ENCODE measurements at regions of chr3 and their contacts with region 1.

Region 1: GRCh38 chr3:52001443-52001974 is 5.8 kb upstream of the RPL29 start:
- DNase-seq: peak; percentile 77 to 94 (median 89)
- ATAC-seq: peak; percentile 99
- H3K4me3 ChIP-seq: no peak overlapping the region
- H3K4me3 Mint-ChIP-seq: no peak overlapping the region
- H3K27ac ChIP-seq: no peak overlapping the region
- H3K27ac Mint-ChIP-seq: no peak overlapping the region
- H3K4me1 ChIP-seq: peaks cover 13% of the 10 kb centered on the region
- H3K4me1 Mint-ChIP-seq: peaks cover 14% of the 10 kb centered on the region
- H3K27me3 ChIP-seq: no peaks in the 10 kb centered on the region
- H3K27me3 Mint-ChIP-seq: no peaks in the 10 kb centered on the region
- CTCF ChIP-seq: peak; percentile 87

Region 2: DNA sequence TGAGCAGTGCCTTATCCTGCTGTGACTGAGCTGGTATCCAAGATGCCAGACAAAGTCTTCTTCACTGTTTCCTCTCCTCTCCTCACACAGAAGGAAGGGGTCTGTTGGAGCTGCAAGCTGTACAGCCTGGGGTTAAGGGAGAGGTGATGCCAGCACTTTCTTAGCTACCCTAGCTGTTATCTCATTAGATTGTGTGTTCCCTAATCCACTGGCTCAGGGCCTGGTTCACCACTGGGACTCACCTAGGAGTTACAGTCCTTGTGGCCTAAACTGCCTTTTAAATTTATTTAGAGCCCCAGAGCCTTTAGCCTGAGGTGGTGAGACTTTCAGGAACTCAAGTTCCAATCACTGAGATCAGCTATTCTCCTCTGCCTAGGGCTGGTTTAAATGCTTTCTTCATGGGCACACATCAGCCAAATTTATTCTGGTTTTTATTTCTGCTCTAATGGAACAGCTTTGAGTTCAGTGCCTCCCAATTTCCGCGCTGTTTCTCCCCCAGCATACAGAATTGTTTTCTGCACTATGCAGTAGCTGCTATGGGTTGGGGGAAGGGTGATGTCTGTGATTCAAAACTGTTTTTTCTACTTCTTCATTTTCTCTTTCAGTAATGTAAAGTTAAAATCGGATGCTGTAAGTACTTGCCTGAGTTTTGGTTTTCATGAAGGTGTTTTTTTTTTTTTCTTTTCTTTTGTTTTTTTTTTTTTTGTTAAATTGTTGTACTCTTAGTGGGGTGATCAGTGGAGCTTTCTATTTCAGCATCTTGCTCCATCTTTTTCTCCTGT is 1127.9 kb before region 1 on chr3:
- CTCF ChIA-PET with region 1: no interaction called
- POLR2A ChIA-PET with region 1: no interaction called
- intact Hi-C with region 1: no loop called
- DNase-seq: no peak
- ATAC-seq: no peak
- H3K4me3 ChIP-seq: no peak overlapping the region
- H3K4me3 Mint-ChIP-seq: no peak overlapping the region
- H3K27ac ChIP-seq: no peak overlapping the region
- H3K27ac Mint-ChIP-seq: no peak overlapping the region
- H3K4me1 ChIP-seq: no peaks in the 10 kb centered on the region
- H3K4me1 Mint-ChIP-seq: no peaks in the 10 kb centered on the region
- H3K27me3 ChIP-seq: peaks cover 0 to 2% of the 10 kb centered on the region in 2 experiments
- H3K27me3 Mint-ChIP-seq: peaks cover 37% of the 10 kb centered on the region
- CTCF ChIP-seq: no peak

Region 3: GRCh38 chr3:51819709-51820406 is 181.7 kb before region 1 on chr3:
- CTCF ChIA-PET with region 1: no interaction called
- POLR2A ChIA-PET with region 1: no interaction called
- intact Hi-C with region 1: no loop called
- DNase-seq: peak in 2 of 9 experiments; percentile 13 to 27
- ATAC-seq: no peak
- H3K4me3 ChIP-seq: no peak overlapping the region
- H3K4me3 Mint-ChIP-seq: no peak overlapping the region
- H3K27ac ChIP-seq: no peak overlapping the region
- H3K27ac Mint-ChIP-seq: no peak overlapping the region
- H3K4me1 ChIP-seq: no peaks in the 10 kb centered on the region
- H3K4me1 Mint-ChIP-seq: peaks cover 9% of the 10 kb centered on the region
- H3K27me3 ChIP-seq: no peaks in the 10 kb centered on the region
- H3K27me3 Mint-ChIP-seq: peaks cover 49% of the 10 kb centered on the region
- CTCF ChIP-seq: no peak

Region 4: GRCh38 chr3:52014613-52015012 is 13.1 kb after region 1 on chr3:
- CTCF ChIA-PET with region 1: interaction called, 22 read pairs
- POLR2A ChIA-PET with region 1: no interaction called
- intact Hi-C with region 1: no loop called
- DNase-seq: no peak
- ATAC-seq: no peak
- H3K4me3 ChIP-seq: no peak overlapping the region
- H3K4me3 Mint-ChIP-seq: no peak overlapping the region
- H3K27ac ChIP-seq: no peak overlapping the region
- H3K27ac Mint-ChIP-seq: no peak overlapping the region
- H3K4me1 ChIP-seq: no peaks in the 10 kb centered on the region
- H3K4me1 Mint-ChIP-seq: no peaks in the 10 kb centered on the region
- H3K27me3 ChIP-seq: no peaks in the 10 kb centered on the region
- H3K27me3 Mint-ChIP-seq: no peaks in the 10 kb centered on the region
- CTCF ChIP-seq: no peak

Region 5: DNA sequence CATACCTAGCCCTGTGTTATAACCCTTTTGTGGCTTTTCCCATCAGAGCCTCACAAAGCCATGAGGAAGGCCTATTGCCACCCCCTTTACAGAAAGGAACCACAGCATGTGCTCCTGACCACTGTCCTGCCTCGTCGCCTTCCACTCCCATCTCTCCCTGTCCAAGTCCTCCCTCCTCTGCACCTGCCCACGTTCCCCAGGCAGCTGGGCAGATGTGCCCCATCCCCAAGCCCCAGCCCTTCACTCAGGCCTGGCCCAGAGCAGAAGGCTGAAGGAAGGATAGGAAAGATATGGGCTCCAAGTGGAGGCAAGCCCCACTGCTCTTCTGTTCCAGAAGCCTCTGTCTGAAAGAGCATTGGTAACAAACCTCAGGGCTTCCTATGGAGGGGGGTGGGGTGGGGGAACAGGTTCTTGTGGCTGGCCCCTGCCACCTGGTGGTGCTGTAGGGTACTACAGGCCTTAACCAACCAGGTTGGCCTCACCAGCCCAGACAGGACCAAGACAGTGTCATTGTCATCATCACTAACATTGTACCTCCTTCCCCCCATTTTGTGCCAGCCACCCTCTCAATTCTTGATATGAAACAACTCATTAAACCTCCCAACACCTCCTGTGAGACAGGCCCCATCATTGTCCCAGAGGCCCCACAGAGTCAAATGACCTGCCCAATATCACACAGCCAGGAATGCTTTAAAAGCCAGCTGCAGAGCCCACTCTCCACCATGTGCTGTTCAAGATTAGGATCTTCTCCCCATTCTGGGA is 142.7 kb after region 1 on chr3:
- CTCF ChIA-PET with region 1: interaction called, 186 read pairs
- POLR2A ChIA-PET with region 1: no interaction called
- intact Hi-C with region 1: loop called in 1 of 2 experiments (anchors 1 kb)
- DNase-seq: peak; percentile 74 to 92 (median 90)
- ATAC-seq: peak; percentile 100
- H3K4me3 ChIP-seq: no peak overlapping the region
- H3K4me3 Mint-ChIP-seq: no peak overlapping the region
- H3K27ac ChIP-seq: no peak overlapping the region
- H3K27ac Mint-ChIP-seq: peak overlapping the region; percentile 27
- H3K4me1 ChIP-seq: peaks cover 7% of the 10 kb centered on the region
- H3K4me1 Mint-ChIP-seq: peaks cover 7% of the 10 kb centered on the region
- H3K27me3 ChIP-seq: no peaks in the 10 kb centered on the region
- H3K27me3 Mint-ChIP-seq: no peaks in the 10 kb centered on the region
- CTCF ChIP-seq: peak; percentile 92